ENCODE measurements at regions of chr17 and their contacts with region 1.

Region 1: GRCh38 chr17:76623271-76624146 is 20.0 kb downstream of the ST6GALNAC1 start:
- DNase-seq: peak; percentile 53
- H3K4me3 ChIP-seq: no peak overlapping the region
- H3K27ac ChIP-seq: peak overlapping the region; percentile 8
- H3K4me1 ChIP-seq: peaks cover 9% of the 10 kb centered on the region
- H3K27me3 ChIP-seq: no peaks in the 10 kb centered on the region
- CTCF ChIP-seq: peak; percentile 95 to 97

Region 2: GRCh38 chr17:76540381-76541300 is 82.9 kb before region 1 on chr17:
- CTCF ChIA-PET with region 1: no interaction called
- dilution Hi-C with region 1: loop called (anchors 5 kb)
- in situ Hi-C with region 1: no loop called
- intact Hi-C with region 1: no loop called
- DNase-seq: peak; percentile 92
- H3K4me3 ChIP-seq: peak overlapping the region in 2 of 3 experiments; percentile 36 to 40
- H3K27ac ChIP-seq: peak overlapping the region; percentile 34
- H3K4me1 ChIP-seq: peaks cover 24% of the 10 kb centered on the region
- H3K27me3 ChIP-seq: no peaks in the 10 kb centered on the region
- CTCF ChIP-seq: peak in 1 of 2 donors; percentile 35

Region 3: GRCh38 chr17:76557368-76558197 is 65.9 kb before region 1 on chr17:
- CTCF ChIA-PET with region 1: no interaction called
- dilution Hi-C with region 1: no loop called
- in situ Hi-C with region 1: no loop called
- intact Hi-C with region 1: loop called (anchors 1 kb)
- DNase-seq: peak; percentile 93
- H3K4me3 ChIP-seq: peak overlapping the region; percentile 61 to 89 (median 86)
- H3K27ac ChIP-seq: peak overlapping the region; percentile 95
- H3K4me1 ChIP-seq: peaks cover 54% of the 10 kb centered on the region
- H3K27me3 ChIP-seq: no peaks in the 10 kb centered on the region
- CTCF ChIP-seq: peak; percentile 36 to 54

Region 4: GRCh38 chr17:76578344-76578979 is 45.0 kb before region 1 on chr17:
- CTCF ChIA-PET with region 1: no interaction called
- dilution Hi-C with region 1: loop called (anchors 5 kb)
- in situ Hi-C with region 1: no loop called
- intact Hi-C with region 1: no loop called
- DNase-seq: peak; percentile 84
- H3K4me3 ChIP-seq: no peak overlapping the region
- H3K27ac ChIP-seq: peak overlapping the region; percentile 52
- H3K4me1 ChIP-seq: peaks cover 54% of the 10 kb centered on the region
- H3K27me3 ChIP-seq: no peaks in the 10 kb centered on the region
- CTCF ChIP-seq: no peak

Region 5: DNA sequence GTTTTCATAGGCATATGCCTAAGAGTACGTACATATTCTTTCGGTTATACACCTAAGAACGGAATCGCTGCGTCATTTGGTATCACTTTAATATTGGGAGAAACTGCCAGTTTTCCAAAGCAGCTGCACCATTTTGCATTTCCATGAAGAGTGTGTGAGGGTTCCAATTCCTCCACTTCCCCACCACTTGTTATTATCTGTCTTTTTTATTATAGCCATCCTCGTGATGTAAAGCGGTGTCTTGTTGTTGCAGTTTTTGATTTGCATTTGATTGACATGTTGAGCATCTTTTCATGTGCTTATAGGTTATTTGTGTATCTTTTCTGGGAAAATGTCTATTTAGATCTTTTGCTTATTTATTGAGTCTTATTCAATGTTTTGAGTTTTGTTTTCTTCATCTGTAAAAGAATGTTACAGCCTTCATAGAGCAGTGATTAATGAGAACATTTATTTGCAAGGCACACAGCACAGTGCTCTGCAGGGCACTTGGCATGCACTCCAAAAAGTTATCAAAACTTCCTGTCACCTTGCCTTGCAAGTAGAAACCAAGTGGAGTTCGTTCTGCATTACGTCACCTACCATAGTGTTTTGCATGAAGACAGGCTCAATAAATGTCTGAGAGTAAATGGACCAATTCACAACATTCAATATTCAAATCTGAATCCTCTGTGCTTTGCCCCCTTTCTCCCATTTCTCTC is 46.7 kb after region 1 on chr17:
- CTCF ChIA-PET with region 1: no interaction called
- dilution Hi-C with region 1: no loop called
- in situ Hi-C with region 1: no loop called
- intact Hi-C with region 1: no loop called
- DNase-seq: no peak
- H3K4me3 ChIP-seq: no peak overlapping the region
- H3K27ac ChIP-seq: no peak overlapping the region
- H3K4me1 ChIP-seq: peaks cover 17% of the 10 kb centered on the region
- H3K27me3 ChIP-seq: no peaks in the 10 kb centered on the region
- CTCF ChIP-seq: no peak

Region 6: GRCh38 chr17:76714822-76715495 is 91.5 kb after region 1 on chr17:
- CTCF ChIA-PET with region 1: no interaction called
- dilution Hi-C with region 1: no loop called
- in situ Hi-C with region 1: no loop called
- intact Hi-C with region 1: loop called (anchors 2 kb)
- DNase-seq: no peak
- H3K4me3 ChIP-seq: no peak overlapping the region
- H3K27ac ChIP-seq: no peak overlapping the region
- H3K4me1 ChIP-seq: peaks cover 10% of the 10 kb centered on the region
- H3K27me3 ChIP-seq: no peaks in the 10 kb centered on the region
- CTCF ChIP-seq: peak; percentile 79 to 84

Measured in mammary epithelial cell (primary cell).